Activated CD4-positive, alpha-beta T cell treated with anti-CD3 and anti-CD28 coated beads, Interleukin-2, amount 10 ng/mL, durations not matched to agents 24 days and 14 days (primary cell): ENCODE measurements at regions of chr3 and their contacts with region 1.

Region 1: GRCh38 chr3:127590593-127591477 is at the start of gene TPRA1:
- DNase-seq: peak; percentile 95
- H3K4me3 Mint-ChIP-seq: peak within 1 kb of the TSS; percentile 93
- H3K27ac Mint-ChIP-seq: peak within 1 kb of the TSS; percentile 95
- H3K4me1 Mint-ChIP-seq: peaks cover 22% of the 10 kb centered on the region
- H3K27me3 Mint-ChIP-seq: no peaks in the 10 kb centered on the region
- total RNA-seq, gene TPRA1: 32.9 and 37.2 TPM in 2 replicates

Region 2: DNA sequence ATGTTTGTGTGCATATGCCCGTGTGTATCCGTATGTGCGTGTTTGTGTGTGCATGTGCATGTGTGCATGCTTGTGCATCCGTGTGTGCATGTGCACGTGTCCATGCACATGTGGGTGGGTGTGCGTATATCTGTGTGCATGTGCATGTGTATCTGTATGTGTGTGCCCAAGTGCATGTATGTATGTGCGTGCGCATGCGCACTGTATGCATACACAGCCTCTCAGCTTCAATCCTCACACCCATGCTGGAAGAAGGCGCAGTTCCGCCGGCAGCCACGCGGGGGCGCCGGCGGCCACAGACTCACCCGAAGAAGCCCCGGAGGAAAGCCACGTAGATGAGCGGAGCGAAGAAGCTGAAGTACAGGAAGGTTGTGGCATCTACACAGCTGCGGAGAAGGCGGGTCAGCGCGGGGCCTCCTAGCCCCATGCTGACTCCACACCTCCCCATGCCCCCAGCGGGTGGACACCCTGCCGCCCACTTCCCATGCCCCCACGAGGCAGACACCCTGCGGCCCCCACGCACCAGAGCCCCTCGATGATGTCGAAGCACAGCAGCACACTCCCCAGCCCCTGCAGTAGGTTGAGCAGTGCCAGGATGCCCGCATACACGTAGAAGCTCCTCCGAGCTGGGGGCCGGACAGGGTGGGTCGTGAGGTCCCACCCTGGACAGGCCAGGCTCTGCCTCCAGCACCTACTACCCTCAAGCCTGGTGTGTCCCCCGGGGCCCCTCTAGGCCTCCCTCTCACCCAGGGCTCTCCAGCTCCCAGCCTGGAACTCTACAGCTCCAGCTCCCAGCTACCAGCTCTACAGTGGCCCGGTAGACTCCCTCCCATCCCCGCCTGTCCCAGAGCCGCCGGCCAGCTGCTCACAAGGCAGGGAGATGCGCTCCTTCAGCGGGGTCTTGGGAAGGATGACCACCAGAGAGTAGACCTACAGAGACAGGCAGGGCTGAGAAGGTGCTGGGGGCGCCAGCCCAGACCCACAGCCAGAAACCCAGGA is 15.7 kb before region 1 on chr3:
- intact Hi-C with region 1: loop called (anchors 1 kb)
- DNase-seq: peak; percentile 96
- H3K4me3 Mint-ChIP-seq: no peak overlapping the region
- H3K27ac Mint-ChIP-seq: no peak overlapping the region
- H3K4me1 Mint-ChIP-seq: peaks cover 7% of the 10 kb centered on the region
- H3K27me3 Mint-ChIP-seq: no peaks in the 10 kb centered on the region

Region 3: GRCh38 chr3:127628788-127629466 is 38.1 kb after region 1 on chr3 and contains the start of gene PODXL2:
- intact Hi-C with region 1: loop called (anchors 2 kb)
- DNase-seq: peak; percentile 80
- H3K4me3 Mint-ChIP-seq: peak within 1 kb of the TSS; percentile 85
- H3K27ac Mint-ChIP-seq: peak within 1 kb of the TSS; percentile 78
- H3K4me1 Mint-ChIP-seq: peaks cover 18% of the 10 kb centered on the region
- H3K27me3 Mint-ChIP-seq: peaks cover 64% of the 10 kb centered on the region
- total RNA-seq, gene PODXL2: 9.2 and 9.8 TPM in 2 replicates

Region 4: GRCh38 chr3:127688416-127689265 is 97.8 kb after region 1 on chr3:
- intact Hi-C with region 1: no loop called
- DNase-seq: no peak
- H3K4me3 Mint-ChIP-seq: no peak overlapping the region
- H3K27ac Mint-ChIP-seq: no peak overlapping the region
- H3K4me1 Mint-ChIP-seq: peaks cover 3% of the 10 kb centered on the region
- H3K27me3 Mint-ChIP-seq: no peaks in the 10 kb centered on the region

Region 5: GRCh38 chr3:127710155-127710941 is 119.5 kb after region 1 on chr3:
- intact Hi-C with region 1: no loop called
- DNase-seq: no peak
- H3K4me3 Mint-ChIP-seq: no peak overlapping the region
- H3K27ac Mint-ChIP-seq: no peak overlapping the region
- H3K4me1 Mint-ChIP-seq: no peaks in the 10 kb centered on the region
- H3K27me3 Mint-ChIP-seq: peaks cover 2% of the 10 kb centered on the region